ENCODE measurements at regions of chr11 and their contacts with region 1.

Region 1: GRCh38 chr11:76919887-76920746 is 59.4 kb downstream of the ACER3 start:
- DNase-seq: peak; percentile 36
- H3K4me3 ChIP-seq: no peak overlapping the region
- CTCF ChIP-seq: peak; percentile 67

Region 2: GRCh38 chr11:76642341-76642740 is 277.8 kb before region 1 on chr11:
- CTCF ChIA-PET with region 1: no interaction called
- POLR2A ChIA-PET with region 1: no interaction called
- DNase-seq: no peak
- H3K4me3 ChIP-seq: no peak overlapping the region
- CTCF ChIP-seq: no peak

Region 3: GRCh38 chr11:76721755-76722677 is 198.1 kb before region 1 on chr11:
- CTCF ChIA-PET with region 1: interaction called, 79 read pairs
- POLR2A ChIA-PET with region 1: no interaction called
- DNase-seq: no peak
- H3K4me3 ChIP-seq: no peak overlapping the region
- CTCF ChIP-seq: peak; percentile 94

Region 4: GRCh38 chr11:76807206-76807875 is 112.8 kb before region 1 on chr11:
- CTCF ChIA-PET with region 1: interaction called, 307 read pairs
- POLR2A ChIA-PET with region 1: no interaction called
- DNase-seq: no peak
- H3K4me3 ChIP-seq: no peak overlapping the region
- CTCF ChIP-seq: peak; percentile 83

Region 5: DNA sequence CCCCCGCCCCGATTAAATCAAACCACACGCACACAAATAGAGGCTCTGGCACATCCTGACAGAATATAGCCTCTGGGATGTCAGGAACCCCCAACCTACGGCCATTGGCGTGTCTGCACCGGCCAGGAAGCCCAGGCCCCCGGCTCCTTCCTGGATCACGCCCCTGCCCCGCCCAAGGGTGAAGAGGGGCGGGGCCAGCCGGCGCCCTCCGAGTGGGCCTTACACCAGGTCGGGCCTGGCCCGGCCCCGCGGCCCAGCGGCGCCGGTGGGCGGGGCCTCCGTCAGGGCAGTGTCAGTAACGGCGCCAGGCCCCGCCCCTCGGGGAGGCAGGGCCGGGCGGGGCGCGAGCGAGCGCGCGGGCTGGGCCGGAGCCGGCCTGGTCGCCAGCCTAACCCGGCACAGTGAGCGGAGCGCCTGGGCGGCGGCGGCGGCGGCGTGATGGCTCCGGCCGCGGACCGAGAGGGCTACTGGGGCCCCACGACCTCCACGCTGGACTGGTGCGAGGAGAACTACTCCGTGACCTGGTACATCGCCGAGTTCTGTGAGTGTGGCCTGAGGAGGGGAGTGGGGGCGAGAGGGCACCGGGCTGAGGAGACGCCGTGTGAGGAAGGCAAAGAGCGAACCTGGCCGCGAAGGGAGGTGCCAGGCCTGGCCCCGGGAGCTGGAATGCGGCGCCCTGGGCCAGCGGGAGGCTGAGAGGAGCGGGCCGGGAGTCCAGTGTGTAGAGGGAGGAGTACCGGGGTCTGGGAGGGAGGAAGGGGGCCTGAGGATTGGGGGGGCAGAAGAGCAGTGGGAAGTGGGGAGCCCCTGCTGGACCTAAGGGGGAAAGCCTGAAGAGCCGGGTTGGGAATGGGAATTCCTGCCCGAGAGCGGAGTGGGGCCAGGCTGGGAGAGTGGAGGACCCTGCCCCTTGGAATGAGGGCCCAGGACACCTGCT is 59.3 kb before region 1 on chr11 and contains the start of gene ACER3:
- CTCF ChIA-PET with region 1: interaction called, 13 read pairs
- POLR2A ChIA-PET with region 1: no interaction called
- DNase-seq: no peak
- H3K4me3 ChIP-seq: peak within 1 kb of the TSS; percentile 86
- CTCF ChIP-seq: peak; percentile 18

Region 6: DNA sequence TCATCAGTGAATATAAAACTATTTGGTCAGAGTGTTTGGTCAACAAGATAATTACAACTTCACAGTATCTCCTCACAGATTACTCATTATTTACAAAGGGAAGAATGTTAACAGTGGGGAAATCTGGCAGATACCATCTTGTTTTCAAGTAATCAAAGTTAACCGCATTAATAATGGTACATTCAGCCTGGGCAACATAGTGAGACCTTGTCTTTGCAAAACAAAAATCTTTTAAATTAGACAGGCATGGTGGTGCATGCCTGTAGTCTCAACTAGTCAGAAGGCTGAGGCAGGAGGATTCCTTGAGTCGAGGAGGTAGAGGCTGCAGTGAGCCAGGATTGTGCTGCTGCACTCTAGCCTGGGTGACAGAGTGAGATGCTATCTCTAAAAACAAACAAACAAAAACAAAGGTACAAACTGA is 19.1 kb after region 1 on chr11:
- CTCF ChIA-PET with region 1: interaction called, 26 read pairs
- POLR2A ChIA-PET with region 1: no interaction called
- DNase-seq: no peak
- H3K4me3 ChIP-seq: no peak overlapping the region
- CTCF ChIP-seq: no peak

Region 7: DNA sequence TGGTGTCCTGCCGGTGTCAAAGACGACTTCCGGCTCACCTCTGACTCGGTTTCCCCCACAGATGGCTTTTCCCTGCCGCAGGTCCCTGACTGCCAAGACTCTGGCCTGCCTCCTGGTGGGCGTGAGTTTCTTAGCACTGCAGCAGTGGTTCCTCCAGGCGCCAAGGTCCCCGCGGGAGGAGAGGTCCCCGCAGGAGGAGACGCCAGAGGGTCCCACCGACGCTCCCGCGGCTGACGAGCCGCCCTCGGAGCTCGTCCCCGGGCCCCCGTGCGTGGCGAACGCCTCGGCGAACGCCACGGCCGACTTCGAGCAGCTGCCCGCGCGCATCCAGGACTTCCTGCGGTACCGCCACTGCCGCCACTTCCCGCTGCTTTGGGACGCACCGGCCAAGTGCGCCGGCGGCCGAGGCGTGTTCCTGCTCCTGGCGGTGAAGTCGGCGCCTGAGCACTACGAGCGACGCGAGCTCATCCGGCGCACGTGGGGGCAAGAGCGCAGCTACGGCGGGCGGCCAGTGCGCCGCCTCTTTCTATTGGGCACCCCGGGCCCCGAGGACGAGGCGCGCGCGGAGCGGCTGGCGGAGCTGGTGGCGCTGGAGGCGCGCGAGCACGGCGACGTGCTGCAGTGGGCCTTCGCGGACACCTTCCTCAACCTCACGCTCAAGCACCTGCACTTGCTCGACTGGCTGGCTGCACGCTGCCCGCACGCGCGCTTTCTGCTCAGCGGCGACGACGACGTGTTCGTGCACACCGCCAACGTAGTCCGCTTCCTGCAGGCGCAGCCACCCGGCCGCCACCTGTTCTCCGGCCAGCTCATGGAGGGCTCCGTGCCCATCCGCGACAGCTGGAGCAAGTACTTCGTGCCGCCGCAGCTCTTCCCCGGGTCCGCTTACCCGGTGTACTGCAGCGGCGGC is 119.6 kb after region 1 on chr11:
- CTCF ChIA-PET with region 1: interaction called, 23 read pairs
- POLR2A ChIA-PET with region 1: no interaction called
- DNase-seq: no peak
- H3K4me3 ChIP-seq: peak overlapping the region; percentile 49
- CTCF ChIP-seq: peak; percentile 69

Measured in AG04449 (cell line).